ENCODE measurements at regions of chr10 and their contacts with region 1.

Region 1: GRCh38 chr10:6050801-6051445 is 11.2 kb downstream of the IL2RA start:
- DNase-seq: peak; percentile 72 to 99 (median 80)
- ATAC-seq: peak; percentile 81
- H3K4me3 ChIP-seq: peak overlapping the region; percentile 63
- H3K4me3 Mint-ChIP-seq: peak overlapping the region; percentile 90
- H3K27ac ChIP-seq: peak overlapping the region; percentile 76 to 89
- H3K27ac Mint-ChIP-seq: peak overlapping the region; percentile 98
- H3K4me1 ChIP-seq: peaks cover 85% of the 10 kb centered on the region
- H3K4me1 Mint-ChIP-seq: peaks cover 86% of the 10 kb centered on the region
- H3K27me3 ChIP-seq: no peaks in the 10 kb centered on the region
- H3K27me3 Mint-ChIP-seq: no peaks in the 10 kb centered on the region
- CTCF ChIP-seq: no peak

Region 2: GRCh38 chr10:6033954-6034353 is 17.0 kb before region 1 on chr10:
- CTCF ChIA-PET with region 1: interaction called, 12 read pairs
- POLR2A ChIA-PET with region 1: interaction called, 39 read pairs
- intact Hi-C with region 1: loop called (anchors 1 to 2 kb)
- DNase-seq: peak in 1 of 14 experiments; percentile 32
- ATAC-seq: no peak
- H3K4me3 ChIP-seq: no peak overlapping the region
- H3K4me3 Mint-ChIP-seq: no peak overlapping the region
- H3K27ac ChIP-seq: no peak overlapping the region
- H3K27ac Mint-ChIP-seq: peak overlapping the region; percentile 19
- H3K4me1 ChIP-seq: peaks cover 33% of the 10 kb centered on the region
- H3K4me1 Mint-ChIP-seq: peaks cover 39% of the 10 kb centered on the region
- H3K27me3 ChIP-seq: no peaks in the 10 kb centered on the region
- H3K27me3 Mint-ChIP-seq: no peaks in the 10 kb centered on the region
- CTCF ChIP-seq: no peak

Region 3: GRCh38 chr10:6062101-6062771 is 11.3 kb after region 1 on chr10 and contains the start of gene IL2RA:
- CTCF ChIA-PET with region 1: interaction called, 24 read pairs
- POLR2A ChIA-PET with region 1: interaction called, 73 read pairs
- intact Hi-C with region 1: loop called in 1 of 2 experiments (anchors 1 kb)
- DNase-seq: peak in 12 of 14 experiments; percentile 28 to 90 (median 51)
- ATAC-seq: peak; percentile 87
- H3K4me3 ChIP-seq: peak within 1 kb of the TSS; percentile 63
- H3K4me3 Mint-ChIP-seq: peak within 1 kb of the TSS; percentile 94
- H3K27ac ChIP-seq: peak within 1 kb of the TSS; percentile 23 to 71
- H3K27ac Mint-ChIP-seq: peak within 1 kb of the TSS; percentile 76
- H3K4me1 ChIP-seq: peaks cover 52% of the 10 kb centered on the region
- H3K4me1 Mint-ChIP-seq: peaks cover 69% of the 10 kb centered on the region
- H3K27me3 ChIP-seq: no peaks in the 10 kb centered on the region
- H3K27me3 Mint-ChIP-seq: no peaks in the 10 kb centered on the region
- CTCF ChIP-seq: no peak
- total RNA-seq, gene IL2RA: 4.9 to 5.4 TPM

Region 4: GRCh38 chr10:6068422-6068821 is 17.5 kb after region 1 on chr10:
- CTCF ChIA-PET with region 1: interaction called, 24 read pairs
- POLR2A ChIA-PET with region 1: interaction called, 73 read pairs
- intact Hi-C with region 1: loop called in 1 of 2 experiments (anchors 2 kb)
- DNase-seq: peak in 9 of 14 experiments; percentile 14 to 76 (median 47)
- ATAC-seq: peak; percentile 82
- H3K4me3 ChIP-seq: peak overlapping the region; percentile 29
- H3K4me3 Mint-ChIP-seq: peak overlapping the region; percentile 75
- H3K27ac ChIP-seq: peak overlapping the region in 1 of 2 donors; percentile 44
- H3K27ac Mint-ChIP-seq: peak overlapping the region; percentile 84
- H3K4me1 ChIP-seq: peaks cover 63% of the 10 kb centered on the region
- H3K4me1 Mint-ChIP-seq: peaks cover 84% of the 10 kb centered on the region
- H3K27me3 ChIP-seq: no peaks in the 10 kb centered on the region
- H3K27me3 Mint-ChIP-seq: no peaks in the 10 kb centered on the region
- CTCF ChIP-seq: no peak

Region 5: DNA sequence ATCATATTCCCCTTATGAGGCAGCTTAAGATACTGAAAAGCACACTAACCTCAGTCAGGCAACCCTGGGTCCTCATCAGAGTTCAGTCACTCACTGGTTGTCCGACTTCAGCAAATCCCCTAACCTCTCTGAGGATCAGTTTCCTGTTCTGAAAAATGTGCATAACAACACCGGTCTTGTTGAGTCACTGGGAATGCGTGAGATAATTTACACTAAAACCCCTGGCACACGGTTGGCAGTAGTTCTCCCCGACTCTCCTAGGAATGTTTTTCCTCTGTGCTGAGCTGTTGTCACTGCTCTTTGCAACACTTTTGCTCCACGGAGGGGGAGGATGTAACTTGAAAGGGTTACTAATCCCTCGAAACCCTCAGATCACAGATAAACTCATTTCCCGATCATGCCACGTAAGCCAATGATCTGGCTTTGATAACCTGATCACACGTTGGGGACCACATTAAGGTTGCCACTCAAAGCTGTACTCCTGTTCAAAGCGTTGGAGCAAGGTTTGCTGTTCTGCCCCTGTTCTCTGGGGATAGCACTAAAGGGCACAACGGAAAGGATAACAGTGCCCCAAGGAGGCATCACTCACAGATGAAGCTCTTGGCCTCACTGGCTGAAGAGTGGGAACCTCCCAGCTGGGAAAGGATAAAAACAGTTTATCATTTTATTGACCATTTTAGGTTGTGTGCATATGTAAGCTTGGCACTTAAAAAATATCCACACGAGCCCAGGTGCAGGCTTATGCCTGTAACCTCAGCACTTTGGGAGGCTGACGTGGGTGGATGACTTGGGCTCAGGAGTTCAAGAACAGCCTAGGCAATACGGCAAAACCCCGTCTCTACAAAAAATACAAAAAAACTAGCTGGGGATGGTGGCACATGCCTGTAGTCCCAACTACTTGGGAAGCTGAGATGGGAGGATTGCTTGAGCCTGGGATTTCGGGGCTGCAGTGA is 32.9 kb after region 1 on chr10:
- CTCF ChIA-PET with region 1: interaction called, 70 read pairs
- POLR2A ChIA-PET with region 1: interaction called, 68 read pairs
- intact Hi-C with region 1: loop called (anchors 1 to 2 kb)
- DNase-seq: peak in 10 of 14 experiments; percentile 11 to 73 (median 32)
- ATAC-seq: peak; percentile 25
- H3K4me3 ChIP-seq: peak overlapping the region; percentile 1
- H3K4me3 Mint-ChIP-seq: peak overlapping the region; percentile 63
- H3K27ac ChIP-seq: peak overlapping the region in 1 of 2 donors; percentile 18
- H3K27ac Mint-ChIP-seq: peak overlapping the region; percentile 43
- H3K4me1 ChIP-seq: peaks cover 37% of the 10 kb centered on the region
- H3K4me1 Mint-ChIP-seq: peaks cover 48% of the 10 kb centered on the region
- H3K27me3 ChIP-seq: no peaks in the 10 kb centered on the region
- H3K27me3 Mint-ChIP-seq: no peaks in the 10 kb centered on the region
- CTCF ChIP-seq: no peak